ENCODE measurements at regions of chr5 and their contacts with region 1.

Region 1: DNA sequence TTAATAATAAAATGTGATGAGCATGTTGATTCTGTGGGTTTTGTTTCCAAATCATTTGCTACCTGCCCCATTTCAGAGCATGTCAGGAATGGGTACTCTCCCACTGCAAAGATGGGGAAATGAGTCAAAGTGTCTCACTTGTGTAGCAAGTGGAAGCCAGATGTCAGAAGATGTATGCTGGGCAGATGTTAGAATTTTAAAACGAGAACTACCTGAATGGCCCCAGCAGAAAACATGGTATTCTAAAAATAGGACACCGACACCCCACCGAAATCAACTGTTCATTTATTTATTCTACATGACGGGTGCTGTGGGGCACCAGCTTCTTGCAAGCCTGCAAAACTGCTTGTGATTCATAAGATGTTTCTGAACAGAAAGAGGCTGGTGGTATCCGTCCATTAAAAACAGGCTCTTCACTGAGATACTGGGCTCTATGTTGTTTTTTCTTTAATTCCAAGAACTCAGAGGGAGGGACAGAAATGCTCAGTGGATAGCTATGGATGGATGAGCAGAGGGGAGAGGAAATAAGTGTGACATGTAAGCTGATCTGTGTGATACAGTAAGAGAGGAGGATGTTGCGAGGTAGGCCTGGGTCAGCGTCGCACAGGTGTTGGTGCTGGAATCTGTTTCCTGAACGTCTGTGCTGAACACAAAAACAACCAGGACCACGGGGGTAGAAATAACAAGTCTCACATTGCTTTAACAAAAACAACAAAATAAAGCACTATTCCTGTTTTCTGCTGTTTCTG is 157.2 kb downstream of the EFNA5 start:
- DNase-seq: no peak

Region 2: DNA sequence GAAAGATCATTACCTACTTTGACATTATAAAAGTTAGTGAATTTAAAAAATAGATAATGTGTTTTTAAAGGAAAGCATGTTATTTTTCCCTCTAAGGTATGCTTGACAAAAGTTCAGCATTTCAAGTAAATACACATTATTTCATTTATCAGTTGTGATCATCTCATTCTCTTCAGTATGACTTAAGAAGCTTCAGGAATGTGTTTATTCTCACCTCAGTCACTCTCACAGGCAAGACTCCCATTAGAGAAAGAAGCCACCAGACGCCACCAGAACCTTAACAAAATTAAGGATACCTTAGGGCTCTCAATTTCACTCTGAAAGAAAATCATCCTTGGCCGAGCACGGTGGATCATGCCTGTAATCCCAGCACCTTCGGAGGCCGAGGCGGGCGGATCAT is 21.1 kb before region 1 on chr5:
- intact Hi-C with region 1: loop called in 1 of 2 experiments (anchors 2 kb)
- DNase-seq: no peak